GM18951 (cell line): ENCODE measurements at regions of chr1 and their contacts with region 1.

Region 1: GRCh38 chr1:234478481-234479309 is at the start of gene TARBP1:
- POLR2A ChIP-seq: peak; percentile 87

Region 2: GRCh38 chr1:234386122-234386521 is 92.6 kb before region 1 on chr1:
- in situ Hi-C with region 1: loop called (anchors 10 kb)
- POLR2A ChIP-seq: no peak

Region 3: GRCh38 chr1:234699795-234700665 is 221.3 kb after region 1 on chr1:
- in situ Hi-C with region 1: no loop called
- POLR2A ChIP-seq: no peak

Region 4: GRCh38 chr1:234772345-234773147 is 293.9 kb after region 1 on chr1:
- in situ Hi-C with region 1: loop called (anchors 25 kb)
- POLR2A ChIP-seq: peak; percentile 46

Region 5: GRCh38 chr1:234862944-234863515 is 384.3 kb after region 1 on chr1:
- in situ Hi-C with region 1: no loop called
- POLR2A ChIP-seq: no peak

Region 6: DNA sequence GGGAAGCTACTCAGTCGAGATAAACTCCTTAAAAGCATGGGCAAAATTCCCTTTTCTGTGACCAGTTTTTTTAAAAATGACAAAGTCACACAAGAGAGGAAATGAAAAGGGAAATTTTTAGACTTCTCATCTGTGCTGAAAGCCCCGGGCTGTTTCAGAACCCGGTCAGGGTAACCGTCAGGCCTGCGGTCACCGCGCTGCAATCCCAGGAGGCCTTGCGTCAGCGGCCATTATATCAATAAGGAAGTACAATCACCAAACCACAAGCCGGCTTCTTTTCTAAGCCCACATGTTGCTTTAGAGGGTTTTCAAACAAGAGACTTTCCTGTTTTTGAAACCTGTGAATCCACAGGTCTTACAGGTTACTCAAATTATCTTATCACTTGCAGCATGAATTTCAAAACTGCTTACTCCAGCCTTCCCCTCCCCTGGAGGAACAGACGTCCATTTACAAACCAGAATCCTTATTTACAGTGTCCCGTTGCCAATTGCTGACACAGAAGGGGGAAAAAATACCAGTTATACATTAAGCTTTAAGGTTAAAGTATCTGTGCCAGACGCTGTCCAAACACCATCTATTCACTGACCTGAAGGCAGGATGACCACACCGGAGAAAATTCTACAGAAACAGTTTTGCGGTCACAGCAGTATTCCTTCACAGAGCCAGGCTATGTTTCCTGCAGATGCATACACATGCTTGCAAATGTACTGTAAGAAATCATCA is 484.6 kb after region 1 on chr1:
- in situ Hi-C with region 1: loop called (anchors 25 kb)
- POLR2A ChIP-seq: no peak

Region 7: GRCh38 chr1:235415008-235415904 is 936.6 kb after region 1 on chr1:
- in situ Hi-C with region 1: loop called (anchors 25 kb)
- POLR2A ChIP-seq: no peak